ENCODE measurements at regions of chr11 and their contacts with region 1.

Region 1: GRCh38 chr11:119067371-119068222 is at the start of gene VPS11:
- DNase-seq: peak; percentile 99
- ATAC-seq: peak; percentile 97
- H3K4me3 ChIP-seq: peak within 1 kb of the TSS; percentile 78 to 99
- H3K27ac ChIP-seq: peak within 1 kb of the TSS; percentile 28 to 92
- H3K4me1 ChIP-seq: no peaks in the 10 kb centered on the region
- H3K27me3 ChIP-seq: no peaks in the 10 kb centered on the region
- total RNA-seq, gene VPS11: 24.9 to 28.0 TPM

Region 2: GRCh38 chr11:119029340-119030028 is 38.1 kb before region 1 on chr11:
- intact Hi-C with region 1: loop called in 1 of 2 experiments (anchors 5 kb)
- DNase-seq: peak; percentile 45 to 60
- ATAC-seq: no peak
- H3K4me3 ChIP-seq: no peak overlapping the region
- H3K27ac ChIP-seq: peak overlapping the region in 1 of 2 donors; percentile 14
- H3K4me1 ChIP-seq: no peaks in the 10 kb centered on the region
- H3K27me3 ChIP-seq: no peaks in the 10 kb centered on the region